ENCODE measurements at regions of chr2 and their contacts with region 1.

Region 1: GRCh38 chr2:48414980-48415835 is 114.7 kb upstream of the STON1 start:
- DNase-seq: peak in 1 of 2 donors; percentile 13
- ATAC-seq: peak; percentile 76

Region 2: GRCh38 chr2:48306409-48307284 is 108.6 kb before region 1 on chr2:
- intact Hi-C with region 1: loop called in 1 of 2 experiments (anchors 10 kb)
- DNase-seq: no peak
- ATAC-seq: no peak